Activated CD4-positive, alpha-beta T cell treated with anti-CD3 and anti-CD28 coated beads for 36 hours (primary cell): ENCODE measurements at regions of chr11 and their contacts with region 1.

Region 1: DNA sequence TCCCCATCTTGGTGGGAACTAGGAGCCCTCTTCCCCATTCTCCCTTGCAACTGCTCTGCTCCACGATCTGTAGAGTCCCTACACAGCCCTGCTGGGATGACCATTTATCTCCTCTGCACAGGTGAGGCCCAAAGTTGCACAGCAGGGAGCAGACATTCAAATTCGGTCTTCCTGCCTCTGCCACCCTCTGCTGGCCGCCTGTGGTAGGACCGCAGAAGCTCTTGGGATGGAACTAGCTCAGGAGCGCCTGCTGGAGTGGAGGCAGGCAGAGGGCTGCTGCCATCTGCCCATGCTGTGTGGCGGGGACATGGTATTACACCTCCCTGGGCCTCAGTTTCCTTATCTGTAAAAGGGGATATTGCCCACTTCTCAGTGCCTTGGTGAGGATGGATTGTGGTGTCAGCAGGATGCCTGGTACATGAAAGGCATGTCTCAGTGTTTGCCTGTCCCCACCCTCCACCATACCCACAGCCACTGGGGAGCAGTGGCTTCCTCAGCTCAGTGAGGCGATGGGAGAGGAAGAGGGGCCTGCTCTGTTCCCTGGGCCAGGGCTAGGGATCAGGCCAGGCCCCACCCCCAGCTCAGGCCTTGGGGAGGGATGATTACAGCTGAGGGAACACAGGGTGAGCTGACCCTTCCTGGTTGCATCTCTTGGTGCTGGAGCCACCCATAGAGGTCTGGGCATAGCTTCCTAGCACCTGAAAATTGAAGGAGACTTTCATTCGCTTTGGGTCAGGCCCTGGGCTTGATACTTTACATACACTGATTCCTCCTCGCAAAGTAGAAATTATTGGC is 11.3 kb upstream of the OMP start:
- DNase-seq: peak; percentile 90
- ATAC-seq: peak; percentile 99
- H3K4me3 Mint-ChIP-seq: no peak overlapping the region
- H3K27ac Mint-ChIP-seq: no peak overlapping the region
- H3K4me1 Mint-ChIP-seq: peaks cover 4% of the 10 kb centered on the region
- H3K27me3 Mint-ChIP-seq: no peaks in the 10 kb centered on the region

Region 2: GRCh38 chr11:76734456-76735420 is 356.6 kb before region 1 on chr11:
- CTCF ChIA-PET with region 1: interaction called, 4 read pairs
- POLR2A ChIA-PET with region 1: no interaction called
- intact Hi-C with region 1: loop called (anchors 5 kb)
- DNase-seq: no peak
- ATAC-seq: no peak
- H3K4me3 Mint-ChIP-seq: no peak overlapping the region
- H3K27ac Mint-ChIP-seq: no peak overlapping the region
- H3K4me1 Mint-ChIP-seq: no peaks in the 10 kb centered on the region
- H3K27me3 Mint-ChIP-seq: no peaks in the 10 kb centered on the region

Region 3: GRCh38 chr11:77039491-77040400 is 51.6 kb before region 1 on chr11:
- CTCF ChIA-PET with region 1: interaction called, 31 read pairs
- POLR2A ChIA-PET with region 1: interaction called, 3 read pairs
- intact Hi-C with region 1: no loop called
- DNase-seq: peak; percentile 56
- ATAC-seq: peak; percentile 69
- H3K4me3 Mint-ChIP-seq: peak overlapping the region; percentile 20
- H3K27ac Mint-ChIP-seq: no peak overlapping the region
- H3K4me1 Mint-ChIP-seq: peaks cover 4% of the 10 kb centered on the region
- H3K27me3 Mint-ChIP-seq: peaks cover 28% of the 10 kb centered on the region

Region 4: GRCh38 chr11:77066229-77067042 is 24.9 kb before region 1 on chr11 and contains the start of gene CAPN5:
- CTCF ChIA-PET with region 1: interaction called, 19 read pairs
- POLR2A ChIA-PET with region 1: no interaction called
- intact Hi-C with region 1: loop called (anchors 1 to 2 kb)
- DNase-seq: peak; percentile 91
- ATAC-seq: peak; percentile 97
- H3K4me3 Mint-ChIP-seq: peak within 1 kb of the TSS; percentile 75
- H3K27ac Mint-ChIP-seq: peak within 1 kb of the TSS; percentile 78
- H3K4me1 Mint-ChIP-seq: peaks cover 4% of the 10 kb centered on the region
- H3K27me3 Mint-ChIP-seq: no peaks in the 10 kb centered on the region
- total RNA-seq, gene CAPN5: 0.62 to 0.76 TPM

Region 5: GRCh38 chr11:77127232-77127911 is 36.0 kb after region 1 on chr11:
- CTCF ChIA-PET with region 1: interaction called, 15 read pairs
- POLR2A ChIA-PET with region 1: no interaction called
- intact Hi-C with region 1: no loop called
- DNase-seq: peak; percentile 75
- ATAC-seq: peak; percentile 89
- H3K4me3 Mint-ChIP-seq: peak overlapping the region; percentile 39
- H3K27ac Mint-ChIP-seq: peak overlapping the region; percentile 25
- H3K4me1 Mint-ChIP-seq: peaks cover 5% of the 10 kb centered on the region
- H3K27me3 Mint-ChIP-seq: peaks cover 3% of the 10 kb centered on the region

Region 6: GRCh38 chr11:77217156-77217555 is 125.8 kb after region 1 on chr11:
- CTCF ChIA-PET with region 1: no interaction called
- POLR2A ChIA-PET with region 1: no interaction called
- intact Hi-C with region 1: no loop called
- DNase-seq: no peak
- ATAC-seq: no peak
- H3K4me3 Mint-ChIP-seq: no peak overlapping the region
- H3K27ac Mint-ChIP-seq: no peak overlapping the region
- H3K4me1 Mint-ChIP-seq: no peaks in the 10 kb centered on the region
- H3K27me3 Mint-ChIP-seq: peaks cover 13% of the 10 kb centered on the region